Transverse colon (tissue), 4 donors: ENCODE measurements at regions of chr13 and their contacts with region 1.

Region 1: DNA sequence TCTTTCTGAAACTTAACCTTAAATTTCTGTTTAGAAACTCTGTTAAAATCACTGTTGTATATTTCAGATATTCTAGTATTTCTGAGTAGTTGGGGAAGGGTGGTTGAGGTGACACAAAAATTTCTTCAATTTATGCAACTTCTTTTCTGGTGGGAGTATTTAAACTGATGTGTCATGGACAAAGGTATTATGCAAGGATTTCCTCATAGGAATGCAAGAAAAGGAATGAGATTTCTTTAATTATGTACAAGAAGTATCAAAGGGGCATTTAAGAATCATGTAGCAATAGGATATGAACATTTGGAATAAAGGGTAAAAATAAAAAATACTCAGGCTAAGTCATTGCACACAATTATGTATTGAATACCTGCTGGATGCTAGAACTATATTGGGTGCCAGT is 575.8 kb upstream of the KLF12 start:
- DNase-seq: no peak
- H3K4me3 ChIP-seq: no peak overlapping the region
- H3K27ac ChIP-seq: no peak overlapping the region
- H3K4me1 ChIP-seq: no peaks in the 10 kb centered on the region
- H3K27me3 ChIP-seq: no peaks in the 10 kb centered on the region
- CTCF ChIP-seq: no peak
- EP300 ChIP-seq: no peak
- POLR2A ChIP-seq: no peak

Region 2: GRCh38 chr13:74662905-74663304 is 47.1 kb before region 1 on chr13:
- in situ Hi-C with region 1: no loop called
- intact Hi-C with region 1: loop called (anchors 2 kb)
- DNase-seq: no peak
- H3K4me3 ChIP-seq: no peak overlapping the region
- H3K27ac ChIP-seq: no peak overlapping the region
- H3K4me1 ChIP-seq: no peaks in the 10 kb centered on the region
- H3K27me3 ChIP-seq: no peaks in the 10 kb centered on the region
- CTCF ChIP-seq: no peak
- EP300 ChIP-seq: no peak
- POLR2A ChIP-seq: no peak